CD8-positive, alpha-beta T cell (primary cell): ENCODE measurements at regions of chr11 and their contacts with region 1.

Region 1: DNA sequence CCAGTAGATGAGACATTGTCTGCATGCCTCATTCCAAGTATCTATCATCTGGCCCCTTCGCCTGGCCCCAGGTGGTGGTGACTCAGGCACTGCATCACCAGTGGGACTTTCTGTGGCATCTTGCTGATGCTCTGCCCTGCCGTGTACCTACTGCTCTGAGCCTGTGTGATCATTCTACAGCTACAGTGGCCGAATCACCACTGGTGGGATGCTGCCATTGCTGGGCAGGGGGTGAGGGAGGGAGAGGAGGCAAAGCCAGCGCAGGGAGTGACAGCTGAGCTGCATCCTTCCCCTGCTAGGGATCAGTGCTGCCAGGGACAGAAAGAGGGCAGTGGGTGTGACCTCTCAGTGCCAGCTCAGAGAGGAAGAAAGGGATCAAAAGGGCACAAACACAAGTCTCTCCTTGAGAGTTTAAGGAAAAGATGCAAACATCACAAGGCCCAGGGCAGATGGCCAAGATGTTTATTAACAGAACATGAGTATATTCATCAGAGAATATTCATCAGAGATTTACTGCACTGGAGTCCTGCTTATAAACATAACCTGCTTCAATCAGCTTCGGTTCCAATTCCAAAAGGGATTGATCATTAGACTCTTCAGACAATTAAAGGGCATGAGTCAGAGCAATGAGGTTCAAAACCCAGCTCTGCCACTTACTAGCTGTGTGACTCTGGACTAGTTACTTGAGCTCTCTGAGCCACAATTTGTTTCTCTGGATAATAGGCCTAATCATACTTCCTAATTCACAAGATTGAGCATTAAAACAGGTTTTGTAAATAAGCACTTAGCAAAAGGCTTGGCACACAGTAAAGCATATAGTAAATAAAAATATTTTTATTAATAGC is 109.8 kb downstream of the NAT10 start:
- DNase-seq: peak in 5 of 9 experiments; percentile 11 to 47 (median 18)
- ATAC-seq: peak; percentile 51
- H3K4me3 ChIP-seq: no peak overlapping the region
- H3K4me3 Mint-ChIP-seq: no peak overlapping the region
- H3K27ac ChIP-seq: no peak overlapping the region
- H3K27ac Mint-ChIP-seq: no peak overlapping the region
- H3K4me1 ChIP-seq: no peaks in the 10 kb centered on the region
- H3K4me1 Mint-ChIP-seq: no peaks in the 10 kb centered on the region
- H3K27me3 ChIP-seq: no peaks in the 10 kb centered on the region
- H3K27me3 Mint-ChIP-seq: no peaks in the 10 kb centered on the region
- CTCF ChIP-seq: no peak

Region 2: GRCh38 chr11:34263440-34264172 is 48.4 kb after region 1 on chr11:
- CTCF ChIA-PET with region 1: no interaction called
- POLR2A ChIA-PET with region 1: no interaction called
- intact Hi-C with region 1: loop called in 1 of 2 experiments (anchors 5 kb)
- DNase-seq: no peak
- ATAC-seq: no peak
- H3K4me3 ChIP-seq: no peak overlapping the region
- H3K4me3 Mint-ChIP-seq: no peak overlapping the region
- H3K27ac ChIP-seq: no peak overlapping the region
- H3K27ac Mint-ChIP-seq: no peak overlapping the region
- H3K4me1 ChIP-seq: peaks cover 13% of the 10 kb centered on the region
- H3K4me1 Mint-ChIP-seq: peaks cover 12% of the 10 kb centered on the region
- H3K27me3 ChIP-seq: no peaks in the 10 kb centered on the region
- H3K27me3 Mint-ChIP-seq: peaks cover 6% of the 10 kb centered on the region
- CTCF ChIP-seq: no peak